ENCODE measurements at regions of chr3 and their contacts with region 1.

Region 1: DNA sequence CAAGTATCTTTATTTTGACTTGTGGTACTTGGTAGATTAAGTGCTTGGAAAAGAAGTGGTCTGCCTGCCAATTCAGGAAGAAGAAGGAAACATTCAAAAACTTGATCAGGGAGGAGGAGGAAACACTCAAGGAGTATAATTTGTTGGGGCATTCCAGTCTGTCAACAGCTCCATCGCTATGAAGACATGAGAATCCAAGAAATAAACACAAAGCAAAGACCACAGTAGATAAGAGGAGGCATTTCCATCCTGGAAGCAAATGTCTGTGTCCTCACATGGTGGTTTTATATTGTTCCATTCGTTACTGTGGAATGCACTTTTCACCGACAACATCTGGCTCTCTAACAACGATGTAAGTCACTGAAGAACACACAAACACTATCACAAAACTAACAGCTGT is 176.1 kb upstream of the FRMD4B start:
- H3K4me3 Mint-ChIP-seq: no peak overlapping the region
- H3K27ac Mint-ChIP-seq: no peak overlapping the region
- H3K4me1 Mint-ChIP-seq: peaks cover 35% of the 10 kb centered on the region
- H3K27me3 Mint-ChIP-seq: no peaks in the 10 kb centered on the region

Region 2: GRCh38 chr3:69013253-69014021 is 548.6 kb before region 1 on chr3 and contains the start of gene EOGT:
- intact Hi-C with region 1: no loop called
- H3K4me3 Mint-ChIP-seq: peak within 1 kb of the TSS; percentile 88
- H3K27ac Mint-ChIP-seq: peak within 1 kb of the TSS; percentile 88
- H3K4me1 Mint-ChIP-seq: peaks cover 23% of the 10 kb centered on the region
- H3K27me3 Mint-ChIP-seq: peaks cover 3% of the 10 kb centered on the region

Region 3: DNA sequence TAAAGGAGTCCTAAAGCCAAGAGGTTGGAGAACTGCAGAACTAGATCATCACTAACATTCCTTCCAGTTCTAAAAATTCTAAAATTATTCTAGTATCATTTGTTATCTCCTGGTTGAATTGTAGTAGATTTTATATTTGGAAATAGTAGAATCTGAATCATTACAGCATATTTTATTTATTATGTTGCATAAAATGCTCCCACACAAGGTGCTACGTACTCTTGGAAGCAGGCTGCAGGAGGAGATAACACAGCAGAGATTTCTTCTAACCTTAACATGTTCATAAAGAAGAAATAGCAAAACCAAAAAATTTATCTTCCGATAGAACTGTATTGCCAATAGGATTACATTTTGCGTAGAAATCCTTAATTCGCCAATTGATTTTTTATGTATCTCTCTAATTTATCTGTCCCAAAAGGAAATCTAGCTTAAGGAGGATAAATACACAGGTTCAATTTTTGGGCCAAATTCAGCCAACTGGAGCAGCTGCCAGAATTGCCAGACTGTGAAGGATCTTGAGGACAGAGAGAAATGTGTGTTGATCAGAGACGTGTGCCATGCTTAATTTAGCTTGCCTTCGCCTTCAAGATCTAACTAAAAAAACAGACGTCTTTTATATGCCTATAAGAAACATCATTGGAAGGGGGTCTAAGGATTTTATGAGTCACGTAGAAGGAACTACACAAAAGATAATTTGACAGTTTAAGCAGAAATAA is 42.9 kb after region 1 on chr3:
- intact Hi-C with region 1: loop called (anchors 1 kb)
- H3K4me3 Mint-ChIP-seq: no peak overlapping the region
- H3K27ac Mint-ChIP-seq: no peak overlapping the region
- H3K4me1 Mint-ChIP-seq: no peaks in the 10 kb centered on the region
- H3K27me3 Mint-ChIP-seq: peaks cover 9% of the 10 kb centered on the region